MCF 10A (cell line): ENCODE measurements at regions of chr5 and their contacts with region 1.

Region 1: DNA sequence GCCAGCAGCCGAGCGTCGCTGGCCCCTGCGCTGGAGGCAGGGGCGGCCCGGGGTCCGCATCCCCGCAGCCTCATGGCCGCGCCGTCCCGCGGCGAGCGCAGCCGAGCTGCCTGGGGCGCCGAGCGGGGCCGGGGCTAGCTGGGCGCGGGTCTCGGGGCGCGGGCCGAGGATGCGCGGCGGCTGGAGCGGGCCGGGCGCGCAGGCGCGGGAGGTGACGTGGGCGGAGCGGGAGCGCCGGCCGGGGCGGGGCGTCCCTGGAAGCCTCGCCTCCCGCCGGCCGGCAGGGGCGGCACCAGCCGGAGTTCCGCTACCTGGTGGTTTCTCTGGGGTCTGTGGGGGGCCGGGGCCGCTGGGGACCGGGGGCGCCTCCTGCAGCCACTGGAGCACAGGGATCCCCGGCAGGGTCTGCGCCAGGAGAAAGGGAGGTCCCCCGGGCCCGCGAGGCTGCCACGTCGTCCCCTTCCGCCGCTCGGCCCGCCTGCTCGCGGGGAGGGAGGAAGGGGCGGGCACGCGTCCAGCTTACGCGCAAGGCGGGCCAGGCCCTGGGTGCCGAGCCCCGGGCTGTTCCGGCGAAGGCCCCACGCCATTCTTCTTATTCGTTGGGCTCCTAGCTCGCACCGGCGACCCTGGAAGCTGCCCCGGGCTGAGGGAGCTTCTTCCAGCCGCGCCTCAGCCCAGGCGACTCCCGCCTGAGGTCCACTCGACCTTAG is at the start of gene LPCAT1:
- DNase-seq: peak; percentile 70
- H3K4me3 Mint-ChIP-seq: peak within 1 kb of the TSS; percentile 78
- H3K27ac Mint-ChIP-seq: peak within 1 kb of the TSS; percentile 19
- H3K4me1 Mint-ChIP-seq: peaks cover 15% of the 10 kb centered on the region
- H3K27me3 Mint-ChIP-seq: no peaks in the 10 kb centered on the region
- CTCF ChIP-seq: no peak
- total RNA-seq, gene LPCAT1: 17.1 and 22.6 TPM in 2 replicates

Region 2: DNA sequence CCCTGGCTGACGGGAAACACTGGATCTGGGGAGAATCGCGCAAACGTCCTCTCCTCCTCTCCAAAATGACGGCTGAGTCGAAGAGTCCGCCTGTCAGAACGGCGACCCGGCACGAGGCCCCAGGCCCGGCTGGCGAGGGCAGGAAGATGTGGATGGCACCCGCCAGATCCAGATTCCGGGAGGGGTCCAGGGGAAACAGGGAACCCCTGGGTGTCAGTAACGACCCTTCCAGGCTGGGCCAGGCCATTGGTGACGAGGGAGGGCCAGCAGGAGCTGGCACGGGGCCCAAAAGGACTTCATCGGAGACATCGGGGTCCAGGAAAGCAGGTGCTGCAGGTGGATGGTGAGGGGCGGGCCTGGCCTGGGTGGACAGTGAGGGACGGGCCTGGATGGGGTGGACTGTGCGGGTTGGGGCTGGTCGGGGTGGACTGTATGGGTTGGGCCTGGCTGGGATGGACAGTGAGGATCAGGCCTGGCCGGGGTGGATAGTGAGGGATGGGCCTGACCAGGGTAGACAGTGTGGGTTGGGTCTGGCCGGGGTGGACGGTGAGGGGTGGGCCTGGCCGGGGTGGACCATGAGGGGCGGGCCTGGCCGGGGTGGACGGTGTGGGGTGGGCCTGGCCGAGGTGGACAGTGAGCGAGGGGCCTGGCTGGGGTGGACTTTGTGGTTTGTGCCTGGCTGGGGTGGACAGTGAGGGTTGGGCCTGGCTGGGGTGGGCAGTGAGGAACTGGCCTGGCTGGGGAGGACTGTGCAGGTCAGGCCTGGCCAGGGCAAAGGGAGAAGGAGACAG is 92.7 kb before region 1 on chr5:
- CTCF ChIA-PET with region 1: no interaction called
- POLR2A ChIA-PET with region 1: no interaction called
- intact Hi-C with region 1: no loop called
- DNase-seq: no peak
- H3K4me3 Mint-ChIP-seq: no peak overlapping the region
- H3K27ac Mint-ChIP-seq: no peak overlapping the region
- H3K4me1 Mint-ChIP-seq: no peaks in the 10 kb centered on the region
- H3K27me3 Mint-ChIP-seq: no peaks in the 10 kb centered on the region
- CTCF ChIP-seq: no peak

Region 3: GRCh38 chr5:1542755-1543154 is 18.8 kb after region 1 on chr5:
- CTCF ChIA-PET with region 1: no interaction called
- POLR2A ChIA-PET with region 1: interaction called, 4 read pairs
- intact Hi-C with region 1: loop called (anchors 1 kb)
- DNase-seq: peak; percentile 99
- H3K4me3 Mint-ChIP-seq: peak overlapping the region; percentile 30
- H3K27ac Mint-ChIP-seq: peak overlapping the region; percentile 81
- H3K4me1 Mint-ChIP-seq: peaks cover 7% of the 10 kb centered on the region
- H3K27me3 Mint-ChIP-seq: peaks cover 41% of the 10 kb centered on the region
- CTCF ChIP-seq: no peak

Region 4: GRCh38 chr5:1594357-1595106 is 70.6 kb after region 1 on chr5:
- CTCF ChIA-PET with region 1: no interaction called
- POLR2A ChIA-PET with region 1: no interaction called
- intact Hi-C with region 1: no loop called
- DNase-seq: no peak
- H3K4me3 Mint-ChIP-seq: no peak overlapping the region
- H3K27ac Mint-ChIP-seq: no peak overlapping the region
- H3K4me1 Mint-ChIP-seq: no peaks in the 10 kb centered on the region
- H3K27me3 Mint-ChIP-seq: peaks cover 21% of the 10 kb centered on the region
- CTCF ChIP-seq: no peak

Region 5: GRCh38 chr5:1718669-1719068 is 194.7 kb after region 1 on chr5:
- CTCF ChIA-PET with region 1: no interaction called
- POLR2A ChIA-PET with region 1: no interaction called
- intact Hi-C with region 1: no loop called
- DNase-seq: peak; percentile 18
- H3K4me3 Mint-ChIP-seq: no peak overlapping the region
- H3K27ac Mint-ChIP-seq: no peak overlapping the region
- H3K4me1 Mint-ChIP-seq: no peaks in the 10 kb centered on the region
- H3K27me3 Mint-ChIP-seq: peaks cover 27% of the 10 kb centered on the region
- CTCF ChIP-seq: no peak